ENCODE measurements at regions of chr14 and their contacts with region 1.

Region 1: DNA sequence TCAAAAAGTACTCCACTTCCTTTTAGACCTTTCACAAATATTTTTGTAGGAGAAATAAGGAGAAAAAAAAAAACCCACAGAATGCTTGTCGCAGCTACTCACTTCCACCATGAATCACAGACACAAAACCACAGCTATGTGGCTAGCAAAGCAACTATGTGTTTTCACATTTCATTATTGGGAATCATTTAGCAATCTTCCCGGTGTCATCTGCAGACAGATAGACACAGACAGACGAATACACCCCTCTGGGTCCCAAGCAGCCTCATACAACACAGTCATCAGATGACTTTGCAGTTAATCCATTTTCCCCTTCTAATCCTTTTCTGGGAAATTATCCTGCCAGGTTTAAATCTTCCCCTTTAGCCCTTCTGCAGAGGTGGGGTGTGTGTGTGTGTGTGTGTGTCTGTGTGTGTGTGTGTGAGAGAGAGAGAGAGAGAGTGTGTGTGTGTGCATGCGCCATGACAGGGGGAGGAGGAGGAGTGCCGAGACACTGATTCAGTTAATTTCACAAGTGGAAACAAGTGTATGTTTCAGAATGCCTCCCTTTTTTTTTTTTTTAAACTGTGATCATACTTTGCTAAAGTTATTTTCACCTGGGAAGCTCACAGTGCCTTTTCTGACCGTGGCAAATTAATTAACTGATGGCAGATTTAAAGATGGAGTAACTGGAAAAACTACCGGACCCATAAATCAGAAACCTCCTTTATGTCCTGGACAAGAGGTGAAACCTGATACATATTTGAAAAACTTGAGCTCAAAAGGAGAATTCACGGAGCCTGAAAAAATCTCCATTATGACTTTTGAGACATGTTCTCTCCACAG is 39.9 kb downstream of the LTBP2 start:
- DNase-seq: peak; percentile 97
- H3K4me3 Mint-ChIP-seq: peak overlapping the region; percentile 67
- H3K27ac Mint-ChIP-seq: peak overlapping the region; percentile 92
- H3K4me1 Mint-ChIP-seq: peaks cover 69% of the 10 kb centered on the region
- H3K27me3 Mint-ChIP-seq: no peaks in the 10 kb centered on the region
- CTCF ChIP-seq: no peak

Region 2: DNA sequence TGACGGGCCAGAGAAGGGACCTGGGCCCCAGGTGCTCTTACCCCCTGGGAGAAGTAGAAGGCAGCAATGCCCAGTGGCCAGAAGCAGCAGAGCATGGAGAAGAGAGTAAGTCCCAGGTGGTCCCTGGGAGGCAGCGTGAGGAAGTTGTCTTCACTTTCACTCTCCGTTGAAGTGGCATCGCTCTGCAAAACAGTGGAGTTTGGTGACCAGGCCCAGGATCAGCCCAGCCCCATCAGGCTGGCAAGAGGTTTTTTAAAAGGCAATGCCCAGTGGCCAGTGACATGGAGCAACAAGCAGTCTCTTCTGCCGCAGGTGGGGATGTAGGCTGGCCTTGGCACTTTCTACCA is 164.3 kb before region 1 on chr14:
- CTCF ChIA-PET with region 1: no interaction called
- POLR2A ChIA-PET with region 1: no interaction called
- intact Hi-C with region 1: no loop called
- DNase-seq: no peak
- H3K4me3 Mint-ChIP-seq: no peak overlapping the region
- H3K27ac Mint-ChIP-seq: no peak overlapping the region
- H3K4me1 Mint-ChIP-seq: no peaks in the 10 kb centered on the region
- H3K27me3 Mint-ChIP-seq: peaks cover 57% of the 10 kb centered on the region
- CTCF ChIP-seq: no peak

Region 3: DNA sequence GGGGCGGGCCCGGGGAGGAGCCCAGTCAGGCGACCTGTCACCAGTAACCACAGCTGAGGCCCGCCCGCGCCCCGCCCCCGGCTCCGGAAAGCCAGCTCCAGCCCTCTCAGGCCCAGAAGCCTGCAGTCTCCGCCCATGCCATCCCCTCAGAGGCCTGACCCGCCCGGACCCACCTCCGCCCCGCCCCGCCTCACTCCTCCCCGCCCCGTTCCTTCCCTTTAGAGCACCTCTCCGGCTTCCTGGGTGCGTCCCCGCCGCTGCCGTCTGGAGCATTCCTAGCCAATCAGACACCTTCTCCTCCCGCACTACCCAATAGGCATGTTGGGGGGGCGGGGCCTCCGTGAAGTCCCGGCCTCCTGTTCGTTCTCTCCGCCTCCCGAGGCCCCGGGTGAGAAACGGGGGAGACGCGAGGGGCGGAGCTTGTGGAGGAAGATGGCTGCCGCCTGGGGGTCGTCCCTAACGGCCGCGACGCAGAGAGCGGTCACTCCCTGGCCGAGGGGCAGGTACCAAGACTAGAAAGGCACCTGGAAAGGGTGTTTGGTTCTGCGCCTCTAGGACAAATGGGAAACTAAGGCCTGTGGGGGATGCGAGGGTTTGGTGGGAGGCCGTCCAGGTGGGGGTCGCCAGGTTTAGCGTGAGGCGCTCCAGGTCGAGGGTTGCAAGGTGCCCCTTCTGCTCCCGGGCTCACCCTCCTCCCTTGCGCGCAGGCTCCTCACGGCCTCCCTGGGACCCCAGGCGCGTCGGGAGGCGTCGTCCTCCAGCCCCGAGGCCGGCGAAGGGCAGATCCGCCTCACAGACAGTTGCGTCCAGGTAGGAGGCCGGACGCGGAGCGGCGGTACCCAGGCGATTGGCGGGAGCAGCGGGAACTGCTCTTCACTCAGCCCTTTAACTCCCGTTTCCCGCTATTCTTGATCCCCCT is 78.5 kb before region 1 on chr14 and contains the start of gene ISCA2:
- CTCF ChIA-PET with region 1: interaction called, 11 read pairs
- POLR2A ChIA-PET with region 1: interaction called, 162 read pairs
- intact Hi-C with region 1: loop called (anchors 5 kb)
- DNase-seq: peak; percentile 99
- H3K4me3 Mint-ChIP-seq: no peak within 1 kb of the TSS
- H3K27ac Mint-ChIP-seq: no peak within 1 kb of the TSS
- H3K4me1 Mint-ChIP-seq: peaks cover 26% of the 10 kb centered on the region
- H3K27me3 Mint-ChIP-seq: no peaks in the 10 kb centered on the region
- CTCF ChIP-seq: no peak
- total RNA-seq, gene ISCA2: 13.9 and 21.1 TPM in 2 replicates

Region 4: GRCh38 chr14:74524076-74524811 is 47.9 kb before region 1 on chr14:
- CTCF ChIA-PET with region 1: no interaction called
- POLR2A ChIA-PET with region 1: no interaction called
- intact Hi-C with region 1: no loop called
- DNase-seq: no peak
- H3K4me3 Mint-ChIP-seq: no peak overlapping the region
- H3K27ac Mint-ChIP-seq: no peak overlapping the region
- H3K4me1 Mint-ChIP-seq: no peaks in the 10 kb centered on the region
- H3K27me3 Mint-ChIP-seq: no peaks in the 10 kb centered on the region
- CTCF ChIP-seq: no peak

Region 5: DNA sequence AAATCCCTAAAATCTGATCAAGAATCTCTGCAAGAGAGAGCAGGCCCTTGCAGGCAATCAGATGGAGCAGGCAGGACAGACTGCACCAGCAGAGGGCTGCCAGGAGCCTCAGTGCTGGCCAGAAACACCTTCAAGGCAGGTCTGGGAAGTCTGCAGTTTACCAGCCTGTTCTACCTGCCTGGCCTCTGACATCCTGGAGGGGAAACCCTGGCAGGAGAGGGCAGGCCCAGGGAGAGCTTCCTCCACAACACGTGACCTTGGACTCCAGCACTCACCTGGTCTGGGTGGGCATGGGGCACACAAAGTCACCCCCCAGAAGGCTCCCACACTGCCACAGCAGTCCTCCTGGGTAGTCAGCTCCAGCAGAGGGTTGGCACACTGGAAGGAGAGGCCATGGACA is 22.5 kb before region 1 on chr14:
- CTCF ChIA-PET with region 1: interaction called, 22 read pairs
- POLR2A ChIA-PET with region 1: interaction called, 17 read pairs
- intact Hi-C with region 1: loop called (anchors 1 kb)
- DNase-seq: peak; percentile 51
- H3K4me3 Mint-ChIP-seq: no peak overlapping the region
- H3K27ac Mint-ChIP-seq: peak overlapping the region; percentile 91
- H3K4me1 Mint-ChIP-seq: peaks cover 21% of the 10 kb centered on the region
- H3K27me3 Mint-ChIP-seq: no peaks in the 10 kb centered on the region
- CTCF ChIP-seq: peak; percentile 47

Region 6: GRCh38 chr14:74618078-74618952 is 46.2 kb after region 1 on chr14:
- CTCF ChIA-PET with region 1: interaction called, 10 read pairs
- POLR2A ChIA-PET with region 1: interaction called, 40 read pairs
- intact Hi-C with region 1: no loop called
- DNase-seq: peak; percentile 92
- H3K4me3 Mint-ChIP-seq: no peak overlapping the region
- H3K27ac Mint-ChIP-seq: peak overlapping the region; percentile 39
- H3K4me1 Mint-ChIP-seq: peaks cover 71% of the 10 kb centered on the region
- H3K27me3 Mint-ChIP-seq: no peaks in the 10 kb centered on the region
- CTCF ChIP-seq: no peak

Region 7: GRCh38 chr14:74655599-74656389 is 83.7 kb after region 1 on chr14:
- CTCF ChIA-PET with region 1: interaction called, 4 read pairs
- POLR2A ChIA-PET with region 1: interaction called, 12 read pairs
- intact Hi-C with region 1: no loop called
- DNase-seq: peak; percentile 83
- H3K4me3 Mint-ChIP-seq: no peak overlapping the region
- H3K27ac Mint-ChIP-seq: peak overlapping the region; percentile 75
- H3K4me1 Mint-ChIP-seq: peaks cover 25% of the 10 kb centered on the region
- H3K27me3 Mint-ChIP-seq: no peaks in the 10 kb centered on the region
- CTCF ChIP-seq: no peak

Region 8: GRCh38 chr14:74712499-74713394 is 140.6 kb after region 1 on chr14 and contains the starts of genes AREL1 and FCF1:
- CTCF ChIA-PET with region 1: interaction called, 4 read pairs
- POLR2A ChIA-PET with region 1: interaction called, 12 read pairs
- intact Hi-C with region 1: no loop called
- DNase-seq: peak; percentile 89
- H3K4me3 Mint-ChIP-seq: peak within 1 kb of the TSS; percentile 99
- H3K27ac Mint-ChIP-seq: peak within 1 kb of the TSS; percentile 99
- H3K4me1 Mint-ChIP-seq: peaks cover 13% of the 10 kb centered on the region
- H3K27me3 Mint-ChIP-seq: no peaks in the 10 kb centered on the region
- CTCF ChIP-seq: no peak
- total RNA-seq, gene AREL1: 27.7 and 29.8 TPM in 2 replicates
- total RNA-seq, gene FCF1: 61.5 and 62.3 TPM in 2 replicates

Region 9: GRCh38 chr14:74762917-74763802 is 191.0 kb after region 1 on chr14 and contains the start of gene YLPM1:
- CTCF ChIA-PET with region 1: interaction called, 3 read pairs
- POLR2A ChIA-PET with region 1: interaction called, 31 read pairs
- intact Hi-C with region 1: no loop called
- DNase-seq: peak; percentile 96
- H3K4me3 Mint-ChIP-seq: peak within 1 kb of the TSS; percentile 98
- H3K27ac Mint-ChIP-seq: peak within 1 kb of the TSS; percentile 98
- H3K4me1 Mint-ChIP-seq: peaks cover 28% of the 10 kb centered on the region
- H3K27me3 Mint-ChIP-seq: no peaks in the 10 kb centered on the region
- CTCF ChIP-seq: peak; percentile 19
- total RNA-seq, gene YLPM1: 40.5 and 43.9 TPM in 2 replicates